ENCODE measurements at regions of chr17 and their contacts with region 1.

Region 1: DNA sequence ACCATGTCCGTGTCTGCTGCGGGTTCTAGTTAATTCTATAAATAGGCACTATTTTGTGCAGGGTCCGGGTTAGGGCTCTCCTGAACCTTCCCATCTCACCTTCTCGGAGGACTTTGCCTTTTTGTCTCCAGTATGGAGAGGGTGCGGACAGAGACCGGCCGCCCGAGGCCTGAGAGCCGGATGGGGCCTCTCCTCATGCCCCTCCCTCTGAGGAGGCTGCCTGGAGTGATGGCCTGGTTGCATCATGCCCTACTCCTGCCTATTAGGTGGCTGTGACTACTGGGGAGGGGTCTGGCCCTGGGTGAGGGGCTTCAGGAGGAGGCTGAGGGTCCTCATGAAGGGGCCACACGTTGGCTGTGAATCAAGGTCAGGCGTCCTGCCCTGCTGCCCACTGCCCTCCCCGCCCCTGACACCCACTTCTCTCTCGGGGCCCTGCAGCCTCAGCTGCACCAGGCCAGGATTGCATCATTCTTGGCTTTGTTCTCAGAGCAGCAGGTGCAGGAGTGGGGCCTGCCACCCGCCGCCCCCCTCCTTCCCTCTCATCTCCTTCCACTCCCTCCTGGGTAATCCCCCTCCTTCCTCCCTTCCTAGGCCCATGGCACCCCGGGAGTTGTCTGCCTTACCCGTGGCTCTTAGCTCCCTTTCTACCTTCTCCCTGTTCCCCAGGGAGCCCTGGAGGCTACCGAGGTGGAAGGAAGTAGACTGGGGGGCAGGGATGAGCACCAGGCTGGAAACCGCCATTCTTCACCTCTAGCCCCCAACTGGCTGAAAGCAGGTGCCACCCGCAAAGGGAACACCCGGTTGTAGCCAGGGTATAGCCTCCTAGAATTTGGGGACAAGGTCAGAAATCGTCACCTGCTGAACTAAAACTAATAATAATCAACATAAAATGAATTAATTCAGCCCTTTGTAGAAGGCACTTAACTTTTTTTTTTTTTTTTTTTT is 12.7 kb upstream of the ARHGAP23 start:
- DNase-seq: peak; percentile 76
- H3K4me3 Mint-ChIP-seq: peak overlapping the region; percentile 56
- H3K27ac Mint-ChIP-seq: peak overlapping the region; percentile 96
- H3K4me1 Mint-ChIP-seq: peaks cover 42% of the 10 kb centered on the region
- H3K27me3 Mint-ChIP-seq: peaks cover 62% of the 10 kb centered on the region
- CTCF ChIP-seq: no peak

Region 2: DNA sequence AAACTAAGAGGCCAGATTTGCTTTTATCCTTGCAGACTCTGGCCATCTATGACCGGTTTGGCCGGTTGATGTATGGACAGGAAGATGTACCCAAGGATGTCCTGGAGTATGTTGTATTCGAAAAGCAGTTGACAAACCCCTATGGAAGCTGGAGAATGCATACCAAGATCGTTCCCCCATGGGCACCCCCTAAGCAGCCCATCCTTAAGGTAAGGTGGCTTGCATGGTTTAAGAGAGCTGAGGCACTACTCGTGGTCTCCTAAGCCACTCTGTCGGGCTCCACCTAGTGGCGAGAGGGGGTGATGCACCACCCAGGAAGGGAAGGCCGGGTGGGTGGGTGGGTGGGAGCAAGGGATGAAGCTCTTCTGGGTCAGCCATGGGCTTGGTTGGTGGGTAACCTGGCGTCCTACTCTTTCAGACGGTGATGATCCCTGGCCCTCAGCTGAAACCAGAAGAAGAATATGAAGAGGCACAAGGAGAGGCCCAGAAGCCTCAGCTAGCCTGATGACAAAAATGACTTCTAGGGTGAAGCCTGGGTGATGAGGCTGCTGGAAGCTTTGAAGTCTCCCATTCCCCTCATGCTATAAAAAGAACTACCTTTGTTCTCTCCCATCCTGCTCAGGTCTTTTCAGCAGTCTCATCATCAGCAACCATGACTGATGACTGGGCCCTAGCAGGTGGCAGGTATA is 93.3 kb before region 1 on chr17:
- CTCF ChIA-PET with region 1: interaction called, 21 read pairs
- intact Hi-C with region 1: no loop called
- DNase-seq: peak; percentile 96
- H3K4me3 Mint-ChIP-seq: no peak overlapping the region
- H3K27ac Mint-ChIP-seq: no peak overlapping the region
- H3K4me1 Mint-ChIP-seq: peaks cover 19% of the 10 kb centered on the region
- H3K27me3 Mint-ChIP-seq: no peaks in the 10 kb centered on the region
- CTCF ChIP-seq: peak; percentile 100

Region 3: DNA sequence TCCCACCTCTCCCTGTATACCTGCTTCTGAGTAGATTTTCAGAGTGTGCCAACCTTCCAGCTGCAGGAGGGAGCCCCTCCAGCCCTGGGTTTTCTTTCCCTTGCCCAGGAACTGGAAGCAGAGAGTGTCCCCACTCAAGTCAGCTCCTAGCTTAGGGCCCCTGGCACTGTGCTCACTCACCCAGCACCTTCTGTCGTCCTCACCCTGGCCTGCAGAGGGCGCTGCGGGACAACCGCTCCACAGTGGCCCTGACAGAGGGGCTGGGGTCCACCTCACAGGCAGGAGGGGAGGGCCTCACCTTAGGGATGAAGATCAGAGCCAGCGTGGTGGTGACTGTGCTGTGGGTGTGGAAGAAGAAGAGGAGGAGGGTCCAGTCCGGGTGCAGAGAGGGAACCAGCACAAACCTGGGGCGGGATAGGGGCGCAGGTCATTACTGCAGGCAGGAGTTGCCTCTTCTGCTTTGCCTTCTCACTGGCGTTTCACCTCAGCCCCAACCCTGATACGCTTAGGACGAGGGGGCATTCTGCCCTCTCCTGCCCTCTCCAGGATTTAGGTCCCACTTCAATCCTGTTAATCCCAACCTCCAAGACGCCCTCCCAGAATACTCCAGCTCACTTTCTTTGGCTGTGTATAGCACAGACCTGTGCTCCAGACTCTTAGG is 81.8 kb before region 1 on chr17:
- CTCF ChIA-PET with region 1: interaction called, 25 read pairs
- intact Hi-C with region 1: no loop called
- DNase-seq: peak; percentile 89
- H3K4me3 Mint-ChIP-seq: no peak overlapping the region
- H3K27ac Mint-ChIP-seq: no peak overlapping the region
- H3K4me1 Mint-ChIP-seq: no peaks in the 10 kb centered on the region
- H3K27me3 Mint-ChIP-seq: peaks cover 92% of the 10 kb centered on the region
- CTCF ChIP-seq: peak; percentile 99

Region 4: DNA sequence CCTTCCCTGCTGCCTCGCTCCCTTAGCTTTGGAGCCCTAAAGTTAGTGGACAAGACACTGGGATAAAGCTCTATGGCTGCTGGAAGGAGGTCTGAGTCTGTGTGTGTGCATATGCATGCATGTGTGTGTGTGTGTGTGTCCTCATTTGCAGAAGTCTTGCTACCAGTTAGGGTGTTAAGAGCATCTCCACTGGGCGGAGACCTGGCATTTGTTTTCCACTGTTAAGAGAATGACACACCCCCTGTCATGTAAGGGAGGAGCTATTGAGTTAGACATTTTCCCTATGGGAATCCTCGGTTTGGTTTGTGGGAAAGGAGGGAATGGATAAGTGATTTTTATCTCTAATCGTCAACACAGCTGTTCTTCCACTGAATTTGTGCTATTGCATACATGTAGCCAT is 12.0 kb before region 1 on chr17:
- CTCF ChIA-PET with region 1: interaction called, 14 read pairs
- intact Hi-C with region 1: no loop called
- DNase-seq: no peak
- H3K4me3 Mint-ChIP-seq: no peak overlapping the region
- H3K27ac Mint-ChIP-seq: no peak overlapping the region
- H3K4me1 Mint-ChIP-seq: no peaks in the 10 kb centered on the region
- H3K27me3 Mint-ChIP-seq: no peaks in the 10 kb centered on the region
- CTCF ChIP-seq: no peak

Region 5: DNA sequence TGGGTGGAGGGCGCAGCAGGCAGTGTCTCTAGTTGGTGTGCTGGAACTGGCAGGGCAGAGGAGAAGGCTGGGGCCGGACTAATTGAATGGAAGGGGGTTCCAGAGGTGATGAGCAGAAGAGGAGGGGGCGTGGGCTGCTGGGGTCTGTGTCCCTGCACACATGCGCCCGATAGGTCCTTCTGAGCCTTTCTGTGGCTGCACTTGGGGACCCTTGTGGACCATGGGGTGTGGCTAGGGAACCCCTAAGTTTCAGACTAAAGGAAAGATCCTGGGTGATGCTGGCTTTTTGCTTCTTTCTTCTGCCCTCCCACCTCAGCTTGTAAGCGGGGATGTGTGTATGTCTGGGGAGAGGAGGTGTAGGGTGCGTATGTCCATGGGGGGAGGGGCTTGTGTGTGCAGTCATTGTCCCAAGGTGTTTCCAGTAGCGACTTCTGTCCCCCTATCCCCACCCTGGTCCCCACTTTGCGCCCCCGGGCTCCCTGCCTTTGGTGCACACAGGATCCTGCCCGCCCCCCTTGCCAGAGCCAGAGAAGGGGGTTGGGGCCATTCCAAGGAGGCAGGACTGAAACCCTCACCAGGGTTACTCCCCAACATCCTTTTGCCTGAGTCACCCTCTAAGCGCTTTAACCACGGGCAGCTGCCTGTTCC is 95.7 kb after region 1 on chr17:
- CTCF ChIA-PET with region 1: no interaction called
- intact Hi-C with region 1: no loop called
- DNase-seq: no peak
- H3K4me3 Mint-ChIP-seq: no peak overlapping the region
- H3K27ac Mint-ChIP-seq: peak overlapping the region; percentile 43
- H3K4me1 Mint-ChIP-seq: no peaks in the 10 kb centered on the region
- H3K27me3 Mint-ChIP-seq: no peaks in the 10 kb centered on the region
- CTCF ChIP-seq: no peak

Region 6: GRCh38 chr17:38912221-38912813 is 496.8 kb after region 1 on chr17:
- CTCF ChIA-PET with region 1: no interaction called
- intact Hi-C with region 1: no loop called
- DNase-seq: no peak
- H3K4me3 Mint-ChIP-seq: no peak overlapping the region
- H3K27ac Mint-ChIP-seq: no peak overlapping the region
- H3K4me1 Mint-ChIP-seq: peaks cover 8% of the 10 kb centered on the region
- H3K27me3 Mint-ChIP-seq: no peaks in the 10 kb centered on the region
- CTCF ChIP-seq: no peak

Measured in Calu3 (cell line).